Psoas muscle (tissue), 8 donors: ENCODE measurements at regions of chr22 and their contacts with region 1.

Region 1: DNA sequence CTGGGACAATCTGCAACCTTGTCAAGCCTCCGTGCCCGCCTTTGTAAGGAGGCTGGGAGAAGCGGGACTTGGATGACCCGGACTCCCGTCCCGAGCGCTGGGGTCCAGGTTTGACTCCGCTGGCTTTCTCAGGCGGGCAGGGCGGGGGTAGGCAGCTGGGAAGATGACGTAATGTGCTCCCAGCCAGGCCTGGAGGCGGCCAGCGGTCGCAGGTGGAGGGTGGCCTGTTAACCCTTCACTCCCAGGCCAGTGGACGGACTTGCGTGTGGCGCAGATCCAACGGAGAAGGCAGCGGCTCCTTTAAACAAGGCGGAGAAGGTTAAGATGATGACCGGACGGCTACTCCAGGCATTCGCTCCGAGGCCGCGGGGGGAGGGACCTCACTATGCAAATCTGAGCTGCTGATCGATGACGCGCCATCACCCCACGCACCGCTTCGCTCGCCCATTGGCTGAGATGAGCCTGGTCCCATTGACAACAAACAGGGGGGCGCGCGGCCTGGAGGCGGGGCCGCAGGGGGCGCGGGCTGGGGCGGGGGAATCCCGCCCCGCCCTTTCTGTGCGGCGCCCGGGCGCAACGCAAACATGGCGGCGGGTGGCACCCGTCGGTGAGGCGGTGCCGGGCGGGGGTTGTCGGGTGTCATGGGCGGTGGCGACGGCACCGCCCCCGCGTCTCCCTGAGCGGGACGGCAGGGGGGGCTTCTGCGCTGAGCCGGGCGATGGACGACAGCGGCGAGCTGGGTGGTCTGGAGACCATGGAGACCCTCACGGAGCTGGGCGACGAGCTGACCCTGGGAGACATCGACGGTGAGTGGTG is at the start of gene SREBF2:
- DNase-seq: peak; percentile 100
- ATAC-seq: peak; percentile 95 to 97 (median 95)
- H3K4me3 ChIP-seq: peak within 1 kb of the TSS; percentile 78
- H3K27ac ChIP-seq: peak within 1 kb of the TSS; percentile 92
- H3K4me1 ChIP-seq: peaks cover 3% of the 10 kb centered on the region
- H3K27me3 ChIP-seq: no peaks in the 10 kb centered on the region
- CTCF ChIP-seq: no peak
- total RNA-seq, gene SREBF2: 36.3 to 47.0 (median 43.6) TPM

Region 2: GRCh38 chr22:41301105-41302020 is 531.4 kb before region 1 on chr22 and contains the start of gene ZC3H7B:
- intact Hi-C with region 1: no loop called
- DNase-seq: peak; percentile 80 to 90
- ATAC-seq: peak; percentile 92 to 95 (median 94)
- H3K4me3 ChIP-seq: peak within 1 kb of the TSS; percentile 100
- H3K27ac ChIP-seq: peak within 1 kb of the TSS; percentile 86
- H3K4me1 ChIP-seq: peaks cover 23% of the 10 kb centered on the region
- H3K27me3 ChIP-seq: no peaks in the 10 kb centered on the region
- CTCF ChIP-seq: peak; percentile 57
- total RNA-seq, gene ZC3H7B: 32.0 to 34.1 (median 33.1) TPM

Region 3: DNA sequence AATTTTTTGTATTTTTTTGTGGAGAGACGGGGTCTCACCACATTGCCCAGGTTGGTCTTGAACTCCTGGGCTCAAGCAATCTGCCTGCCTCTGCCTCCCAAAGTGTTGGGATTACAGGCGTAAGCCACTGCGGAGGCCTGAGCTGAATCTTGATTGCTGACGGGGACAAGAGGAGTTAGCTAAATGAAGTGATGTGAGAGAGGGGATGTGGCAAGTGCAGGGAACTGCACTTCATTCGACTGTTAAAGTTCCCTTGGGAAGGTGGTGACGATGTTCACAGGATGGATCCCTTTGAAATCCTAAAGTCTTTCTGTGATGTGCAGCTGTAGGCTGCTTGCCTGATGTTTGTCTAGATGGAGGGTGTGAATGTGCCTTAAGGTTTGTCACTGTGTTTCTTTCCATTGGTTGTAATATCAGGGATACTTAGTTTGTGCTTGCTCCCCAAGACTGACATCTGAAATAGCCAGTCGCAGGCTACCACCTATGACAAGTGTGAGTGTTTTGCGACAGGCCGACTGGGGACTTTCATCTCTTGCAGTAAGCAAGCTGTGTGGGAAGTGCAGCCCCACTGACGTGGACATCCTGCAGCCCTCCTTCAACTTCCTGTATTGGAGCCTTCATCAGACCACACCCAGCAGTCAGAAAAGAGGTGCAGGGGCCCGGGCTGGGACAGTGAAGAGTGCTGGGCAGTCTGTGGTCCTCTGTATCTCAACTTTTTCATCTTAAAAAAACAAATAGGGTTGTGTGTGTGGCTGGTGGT is 51.8 kb before region 1 on chr22:
- intact Hi-C with region 1: no loop called
- DNase-seq: peak; percentile 56 to 80
- ATAC-seq: peak in 2 of 4 donors; percentile 42 to 51
- H3K4me3 ChIP-seq: no peak overlapping the region
- H3K27ac ChIP-seq: no peak overlapping the region
- H3K4me1 ChIP-seq: no peaks in the 10 kb centered on the region
- H3K27me3 ChIP-seq: no peaks in the 10 kb centered on the region
- CTCF ChIP-seq: no peak

Region 4: GRCh38 chr22:41899992-41900651 is 67.4 kb after region 1 on chr22:
- intact Hi-C with region 1: loop called in 1 of 2 experiments (anchors 10 kb)
- DNase-seq: peak in 1 of 2 donors; percentile 79
- ATAC-seq: peak in 3 of 4 donors; percentile 17 to 54 (median 53)
- H3K4me3 ChIP-seq: no peak overlapping the region
- H3K27ac ChIP-seq: peak overlapping the region; percentile 78
- H3K4me1 ChIP-seq: peaks cover 45% of the 10 kb centered on the region
- H3K27me3 ChIP-seq: no peaks in the 10 kb centered on the region
- CTCF ChIP-seq: no peak